ENCODE measurements at regions of chr1 and their contacts with region 1.

Region 1: GRCh38 chr1:113978863-113979702 is at the start of gene OLFML3:
- DNase-seq: peak; percentile 95
- ATAC-seq: peak; percentile 79
- H3K4me3 ChIP-seq: peak within 1 kb of the TSS; percentile 43
- H3K27ac ChIP-seq: peak within 1 kb of the TSS; percentile 94
- H3K4me1 ChIP-seq: peaks cover 31% of the 10 kb centered on the region
- H3K27me3 ChIP-seq: no peaks in the 10 kb centered on the region
- CTCF ChIP-seq: peak; percentile 83
- POLR2A ChIP-seq: peak; percentile 42; the same call in 1 of the 2 replicates
- RAD21 ChIP-seq: peak; percentile 82
- total RNA-seq, gene OLFML3: 37.8 and 40.9 TPM in 2 replicates

Region 2: DNA sequence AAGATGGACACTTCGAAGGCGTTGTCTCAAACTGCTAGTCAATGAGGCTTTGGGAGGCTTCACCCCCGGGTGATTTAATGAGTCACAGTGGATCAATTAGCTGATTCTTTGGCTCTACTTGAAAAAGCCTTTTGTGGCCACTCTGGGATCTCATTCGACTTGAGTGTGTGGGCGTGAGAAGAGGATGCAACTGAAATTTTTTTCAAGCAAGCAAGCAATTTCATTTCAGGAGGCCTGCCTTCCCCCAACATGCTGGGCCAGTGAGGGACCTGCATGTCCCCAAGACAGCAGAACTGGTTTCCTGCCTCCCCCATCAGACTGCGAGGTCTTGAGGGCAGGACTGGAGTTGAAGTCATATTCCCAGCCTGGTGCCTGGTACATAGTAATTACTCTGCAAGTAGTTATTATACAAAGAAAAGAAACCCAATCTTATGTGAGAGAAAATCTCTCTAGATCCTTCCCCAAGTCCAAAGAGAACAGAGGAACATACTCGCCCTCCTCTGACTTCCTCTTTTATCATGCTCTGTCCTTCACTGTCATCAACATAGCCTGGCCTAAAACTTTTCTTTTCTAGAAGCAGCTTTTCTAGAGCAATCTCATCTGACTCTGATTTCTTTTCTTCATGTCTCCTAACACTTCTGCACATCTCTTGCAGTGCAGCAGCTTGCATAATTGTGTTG is 151.9 kb after region 1 on chr1:
- CTCF ChIA-PET with region 1: interaction called, 3 read pairs
- POLR2A ChIA-PET with region 1: no interaction called
- dilution Hi-C with region 1: no loop called
- in situ Hi-C with region 1: no loop called
- intact Hi-C with region 1: loop called (anchors 2 kb)
- DNase-seq: no peak
- ATAC-seq: no peak
- H3K4me3 ChIP-seq: no peak overlapping the region
- H3K27ac ChIP-seq: no peak overlapping the region
- H3K4me1 ChIP-seq: no peaks in the 10 kb centered on the region
- H3K27me3 ChIP-seq: peaks cover 9% of the 10 kb centered on the region
- CTCF ChIP-seq: no peak
- POLR2A ChIP-seq: no peak
- RAD21 ChIP-seq: no peak

Region 3: DNA sequence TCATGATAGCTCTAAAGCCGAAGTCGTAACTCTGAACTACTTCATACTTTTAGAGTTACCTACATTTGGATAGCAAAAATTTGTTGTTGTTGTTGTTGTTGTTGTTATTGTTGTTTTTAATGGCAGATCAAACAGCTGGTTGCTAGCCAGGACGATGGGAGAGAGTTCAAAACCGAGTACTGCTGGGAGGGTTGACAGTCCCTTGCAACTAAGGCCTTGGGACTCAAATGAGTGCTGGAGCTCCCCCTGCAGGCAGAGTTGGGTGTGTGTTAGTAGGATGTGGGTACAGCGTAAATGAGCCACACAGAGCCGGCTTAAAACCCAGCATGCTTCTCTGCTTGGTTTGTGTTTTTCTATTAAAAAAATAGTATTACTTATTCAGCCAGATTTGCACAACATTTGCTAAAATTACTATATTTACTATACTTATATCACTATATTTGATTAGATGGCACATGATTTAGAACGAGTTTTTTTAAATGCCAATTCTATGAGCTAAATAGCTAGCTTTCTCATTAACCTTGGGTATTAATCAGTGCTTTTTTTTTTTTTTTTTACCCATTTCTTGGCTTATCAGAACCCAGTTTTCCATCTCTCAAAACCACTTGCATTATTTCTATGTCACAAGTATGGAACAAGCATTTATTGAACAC is 303.8 kb after region 1 on chr1:
- CTCF ChIA-PET with region 1: interaction called, 30 read pairs
- POLR2A ChIA-PET with region 1: no interaction called
- dilution Hi-C with region 1: no loop called
- in situ Hi-C with region 1: loop called (anchors 5 kb)
- intact Hi-C with region 1: loop called (anchors 1 kb)
- DNase-seq: peak; percentile 87
- ATAC-seq: peak; percentile 100
- H3K4me3 ChIP-seq: no peak overlapping the region
- H3K27ac ChIP-seq: no peak overlapping the region
- H3K4me1 ChIP-seq: peaks cover 2% of the 10 kb centered on the region; the same call in 1 of the 2 replicates
- H3K27me3 ChIP-seq: peaks cover 6% of the 10 kb centered on the region
- CTCF ChIP-seq: peak; percentile 90
- POLR2A ChIP-seq: no peak
- RAD21 ChIP-seq: peak; percentile 74

Region 4: DNA sequence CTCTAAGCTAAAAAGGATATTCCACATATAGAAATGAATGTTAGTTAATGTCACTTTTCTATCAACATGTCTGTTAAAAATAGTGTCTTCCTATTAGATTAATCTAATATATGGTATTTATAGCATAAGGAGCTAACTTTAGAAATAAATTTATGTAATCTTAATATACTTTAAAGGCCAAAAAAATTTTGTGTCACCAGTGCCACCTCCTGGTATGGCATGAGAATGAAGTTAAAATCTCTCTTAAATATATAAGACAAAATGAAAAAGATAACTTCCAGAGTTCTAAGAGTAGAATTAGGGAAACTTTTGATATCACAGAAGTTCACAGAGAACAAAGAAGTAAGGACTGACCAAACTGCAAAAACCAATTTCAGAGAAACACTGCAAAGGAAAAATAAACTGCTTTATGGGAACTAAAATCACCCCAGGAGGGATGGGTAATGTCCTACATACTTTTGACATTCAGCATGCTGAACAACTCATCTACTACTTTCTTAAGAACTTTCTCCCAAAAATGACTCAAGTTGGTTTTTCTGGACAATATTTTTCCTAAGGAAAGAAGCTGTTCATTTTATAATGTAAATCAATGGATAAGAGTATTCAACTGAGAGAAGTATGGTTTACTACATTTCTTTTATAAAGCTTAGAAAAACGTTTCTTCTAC is 449.1 kb after region 1 on chr1:
- CTCF ChIA-PET with region 1: no interaction called
- POLR2A ChIA-PET with region 1: no interaction called
- dilution Hi-C with region 1: no loop called
- in situ Hi-C with region 1: no loop called
- intact Hi-C with region 1: loop called (anchors 5 kb)
- DNase-seq: peak; percentile 37
- ATAC-seq: peak; percentile 57
- H3K4me3 ChIP-seq: no peak overlapping the region
- H3K27ac ChIP-seq: no peak overlapping the region
- H3K4me1 ChIP-seq: no peaks in the 10 kb centered on the region
- H3K27me3 ChIP-seq: no peaks in the 10 kb centered on the region
- CTCF ChIP-seq: peak; percentile 53
- POLR2A ChIP-seq: no peak
- RAD21 ChIP-seq: peak; percentile 33

Region 5: DNA sequence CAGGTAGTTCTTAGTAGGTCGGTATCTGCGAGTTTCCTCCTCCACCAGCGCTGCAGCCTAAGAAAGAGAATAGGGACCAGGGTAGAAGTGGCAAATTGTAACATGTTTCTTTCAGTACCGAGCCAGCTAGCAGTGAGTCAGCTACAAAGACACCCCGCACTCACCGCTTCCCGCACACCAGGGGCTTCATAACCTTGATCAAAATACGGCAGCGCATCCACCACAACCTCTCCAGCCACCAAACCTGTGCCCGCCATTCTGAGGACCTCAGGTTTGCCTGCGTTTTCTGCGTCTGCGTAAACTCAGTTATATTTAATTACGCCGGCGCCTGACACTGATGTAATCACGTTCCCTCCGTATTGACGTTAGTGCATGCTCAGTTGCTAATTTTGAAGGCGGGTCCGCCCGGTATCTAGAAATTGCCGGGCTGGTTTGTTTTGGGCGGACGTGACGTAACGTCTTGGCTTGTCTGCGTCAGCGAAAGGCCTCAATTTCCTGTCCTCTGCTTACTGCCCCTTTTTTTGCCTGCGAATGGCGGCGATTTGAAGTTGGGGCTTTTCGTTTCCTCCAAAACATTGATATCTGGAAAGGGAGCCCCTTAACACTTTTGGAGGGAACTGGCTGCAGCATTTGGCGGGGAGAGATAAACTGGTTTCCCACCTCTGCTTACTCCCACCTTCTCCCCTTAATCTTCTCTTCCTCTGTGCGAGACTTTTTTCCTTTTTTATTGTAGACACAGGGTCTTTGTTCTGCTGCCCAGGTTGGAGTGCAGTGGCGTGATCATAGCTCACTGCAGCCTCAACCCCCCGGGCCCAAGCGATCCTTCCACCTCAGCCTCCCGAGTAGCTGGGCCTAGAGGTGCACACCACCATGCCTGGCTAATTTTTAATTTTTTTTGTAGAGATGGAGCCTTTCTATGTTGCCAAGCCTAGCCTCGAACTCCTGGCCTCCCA is 602.5 kb after region 1 on chr1 and contains the start of gene BCAS2:
- CTCF ChIA-PET with region 1: no interaction called
- POLR2A ChIA-PET with region 1: no interaction called
- dilution Hi-C with region 1: no loop called
- in situ Hi-C with region 1: no loop called
- intact Hi-C with region 1: loop called (anchors 5 kb)
- DNase-seq: peak; percentile 99
- ATAC-seq: peak; percentile 99
- H3K4me3 ChIP-seq: peak within 1 kb of the TSS; percentile 75
- H3K27ac ChIP-seq: peak within 1 kb of the TSS; percentile 80
- H3K4me1 ChIP-seq: no peaks in the 10 kb centered on the region; the same call in 1 of the 2 replicates
- H3K27me3 ChIP-seq: no peaks in the 10 kb centered on the region
- CTCF ChIP-seq: no peak
- POLR2A ChIP-seq: peak; percentile 83
- RAD21 ChIP-seq: no peak
- total RNA-seq, gene BCAS2: 15.4 and 39.4 TPM in 2 replicates

Region 6: DNA sequence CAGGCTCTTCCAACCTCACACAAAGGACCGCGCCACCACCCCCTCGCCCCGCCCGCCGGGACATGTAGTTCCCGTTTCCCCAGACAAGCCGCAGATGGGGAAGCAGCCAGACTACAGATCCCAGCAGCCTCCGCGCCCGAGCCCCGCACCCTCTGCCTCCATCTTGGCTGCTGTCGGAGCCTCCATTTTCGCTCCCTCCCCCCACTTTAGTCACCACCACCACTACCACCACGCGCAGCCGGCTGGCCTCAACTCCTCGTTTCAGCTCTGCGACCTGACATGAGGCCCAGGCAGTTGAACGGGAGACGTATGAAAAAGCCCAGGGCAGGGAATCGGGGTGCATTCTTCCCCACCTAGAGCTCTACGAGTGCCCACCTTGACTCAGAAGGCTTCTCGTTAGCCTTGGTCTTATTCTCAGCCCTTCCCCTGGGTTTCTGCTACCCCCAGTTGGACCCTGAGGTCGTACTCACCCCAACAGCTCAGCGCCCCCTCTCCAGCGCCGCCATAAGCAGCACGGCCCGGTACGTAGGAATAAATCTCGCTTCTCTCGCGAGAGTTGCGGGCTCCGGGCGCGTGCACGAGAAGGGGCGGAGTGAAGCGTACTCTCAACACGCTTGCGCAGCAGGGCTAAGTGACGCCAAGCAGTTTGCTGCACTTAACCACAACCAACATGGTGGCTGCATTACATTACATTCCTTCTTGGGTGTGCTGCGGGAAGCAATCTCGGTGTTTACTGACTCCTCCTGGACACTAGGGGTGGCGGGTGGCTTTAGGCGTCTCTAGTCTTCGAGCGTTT is 778.6 kb after region 1 on chr1 and contains the start of gene CSDE1:
- CTCF ChIA-PET with region 1: no interaction called
- POLR2A ChIA-PET with region 1: no interaction called
- dilution Hi-C with region 1: no loop called
- in situ Hi-C with region 1: no loop called
- intact Hi-C with region 1: loop called (anchors 5 kb)
- DNase-seq: peak; percentile 99
- ATAC-seq: peak; percentile 93
- H3K4me3 ChIP-seq: peak within 1 kb of the TSS; percentile 67
- H3K27ac ChIP-seq: peak within 1 kb of the TSS; percentile 89
- H3K4me1 ChIP-seq: peaks cover 2% of the 10 kb centered on the region; the same call in 1 of the 2 replicates
- H3K27me3 ChIP-seq: no peaks in the 10 kb centered on the region
- CTCF ChIP-seq: peak; percentile 49
- POLR2A ChIP-seq: peak; percentile 98
- RAD21 ChIP-seq: peak; percentile 49
- total RNA-seq, gene CSDE1: 879 and 2,287 TPM in 2 replicates

Measured in IMR-90 (cell line).